H1 (cell line): ENCODE measurements at regions of chr15 and their contacts with region 1.

Region 1: DNA sequence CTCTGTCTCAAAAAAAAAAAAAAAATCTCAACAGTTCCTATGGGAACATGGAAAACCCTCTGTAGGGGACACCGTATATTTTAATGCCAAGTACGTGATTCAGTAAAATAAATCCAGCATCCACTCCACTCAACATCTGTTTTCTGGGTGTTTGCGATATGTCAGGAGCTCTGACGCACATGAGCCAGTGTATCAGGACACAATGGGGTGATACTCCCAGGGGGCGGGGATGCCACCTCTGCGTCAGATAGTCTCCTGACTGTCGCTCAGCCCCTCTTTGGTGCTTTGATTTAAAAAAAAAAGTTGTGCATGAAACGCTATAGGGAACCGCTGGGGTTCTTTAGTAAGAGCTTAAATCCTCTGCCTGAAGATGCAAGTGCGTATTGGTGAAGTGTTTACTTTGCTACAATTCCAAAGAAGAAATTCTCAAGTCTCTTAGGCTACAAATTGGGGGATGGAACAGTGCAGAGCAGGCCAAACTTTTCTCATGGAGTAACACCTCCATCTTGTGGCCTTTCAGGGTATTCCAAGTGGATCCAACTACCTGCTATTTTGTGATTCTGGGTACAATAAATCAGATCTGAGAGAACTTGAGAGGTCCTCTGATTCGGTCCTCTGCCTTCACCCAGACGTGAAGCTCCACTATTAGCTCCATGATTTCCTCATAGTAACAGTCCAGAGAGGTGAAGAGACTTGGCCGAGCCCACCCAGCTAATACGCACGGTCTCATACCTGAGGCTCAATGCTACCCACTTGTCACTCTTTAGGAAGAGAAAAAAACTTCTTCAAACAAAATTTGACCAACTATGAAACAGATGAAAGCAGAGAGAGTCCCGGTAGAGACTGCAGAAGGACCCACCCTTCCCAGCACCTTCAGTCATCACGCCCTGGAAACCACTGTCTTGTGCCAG is 9.3 kb upstream of the NR2E3 start:
- DNase-seq: peak; percentile 21 to 77
- H3K4me3 ChIP-seq: no peak overlapping the region
- H3K27ac ChIP-seq: no peak overlapping the region
- H3K4me1 ChIP-seq: peaks cover 0 to 4% (median 1%) of the 10 kb centered on the region in 4 experiments; a peak in 3 of 7 replicates
- H3K27me3 ChIP-seq: no peaks in the 10 kb centered on the region
- CTCF ChIP-seq: peak in 2 of 3 experiments; percentile 84 to 86; a peak in 3 of 4 replicates
- EP300 ChIP-seq: no peak; a peak in 1 of 3 replicates
- POLR2A ChIP-seq: no peak
- RAD21 ChIP-seq: peak; percentile 95 to 98

Region 2: DNA sequence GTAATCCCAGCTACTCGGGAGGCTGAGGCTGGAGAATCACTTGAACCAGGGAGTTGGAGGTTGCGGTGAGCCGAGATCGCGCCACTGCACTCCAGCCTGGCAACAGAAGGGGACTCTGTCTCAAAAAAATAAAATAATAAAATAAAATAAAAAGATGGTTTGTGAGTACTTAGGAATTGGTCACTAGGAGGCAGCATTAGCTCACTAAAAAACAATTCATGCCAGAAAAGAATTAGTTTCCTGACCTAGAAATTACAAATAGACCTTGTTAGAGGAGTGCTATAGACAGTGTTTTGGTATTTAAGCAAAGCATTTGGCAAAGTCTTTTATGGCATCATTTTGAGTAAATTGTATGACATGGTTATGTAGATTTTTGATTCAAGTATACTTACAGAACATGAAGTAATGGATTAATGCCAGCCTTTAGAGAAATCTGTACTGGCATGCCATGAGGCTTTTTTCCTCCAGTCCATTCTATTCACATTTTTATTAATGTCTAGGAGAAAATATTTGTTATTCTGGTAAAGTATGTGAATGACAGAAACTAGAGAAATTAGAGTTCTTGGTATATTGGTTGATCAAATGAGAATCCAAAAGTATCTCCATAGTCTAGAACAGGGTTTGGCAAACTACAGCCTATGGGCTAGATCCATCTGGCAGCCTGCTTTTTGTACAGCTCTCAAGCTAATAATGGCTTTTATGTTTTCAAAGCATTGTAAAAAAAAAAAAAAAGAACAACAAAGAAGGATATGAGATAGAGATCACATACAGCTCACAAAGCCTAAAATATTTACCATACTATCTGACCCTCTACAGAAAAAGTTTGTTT is 826.9 kb before region 1 on chr15:
- CTCF ChIA-PET with region 1: interaction called, 11 read pairs
- POLR2A ChIA-PET with region 1: no interaction called
- DNase-seq: peak in 1 of 2 experiments; percentile 42
- H3K4me3 ChIP-seq: no peak overlapping the region
- H3K27ac ChIP-seq: no peak overlapping the region
- H3K4me1 ChIP-seq: no peaks in the 10 kb centered on the region
- H3K27me3 ChIP-seq: no peaks in the 10 kb centered on the region
- CTCF ChIP-seq: peak in 2 of 3 experiments; percentile 31 to 37; a peak in 2 of 4 replicates
- EP300 ChIP-seq: no peak
- POLR2A ChIP-seq: no peak
- RAD21 ChIP-seq: peak; percentile 58 to 68

Region 3: DNA sequence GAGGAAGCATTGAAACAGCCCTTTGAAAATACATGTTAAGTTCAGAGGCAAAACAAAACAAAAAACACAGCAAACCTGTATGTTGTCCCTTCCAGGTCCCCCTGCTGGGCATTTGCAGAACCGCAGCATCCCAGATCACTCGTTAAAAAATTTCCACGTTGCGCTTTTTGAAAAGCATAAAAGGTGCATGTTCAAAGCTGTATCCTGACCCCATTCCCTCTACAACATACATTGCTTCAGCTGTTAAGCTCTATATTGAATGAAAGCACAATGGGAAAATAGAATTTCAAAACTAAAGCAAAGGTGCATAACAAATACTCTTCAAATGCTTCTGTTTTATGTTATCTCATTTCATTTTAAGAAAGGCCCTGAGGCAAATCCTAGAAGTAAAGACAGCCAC is 357.6 kb before region 1 on chr15:
- CTCF ChIA-PET with region 1: interaction called, 28 read pairs
- POLR2A ChIA-PET with region 1: no interaction called
- DNase-seq: peak in 1 of 2 experiments; percentile 79
- H3K4me3 ChIP-seq: no peak overlapping the region
- H3K27ac ChIP-seq: no peak overlapping the region
- H3K4me1 ChIP-seq: peaks cover 0 to 6% (median 3%) of the 10 kb centered on the region in 4 experiments; a peak in 3 of 7 replicates
- H3K27me3 ChIP-seq: no peaks in the 10 kb centered on the region
- CTCF ChIP-seq: peak; percentile 59 to 66 (median 65)
- EP300 ChIP-seq: no peak
- POLR2A ChIP-seq: no peak
- RAD21 ChIP-seq: peak; percentile 49 to 62

Region 4: GRCh38 chr15:71669688-71670087 is 131.4 kb before region 1 on chr15:
- CTCF ChIA-PET with region 1: no interaction called
- POLR2A ChIA-PET with region 1: no interaction called
- DNase-seq: no peak
- H3K4me3 ChIP-seq: no peak overlapping the region
- H3K27ac ChIP-seq: no peak overlapping the region
- H3K4me1 ChIP-seq: no peaks in the 10 kb centered on the region
- H3K27me3 ChIP-seq: no peaks in the 10 kb centered on the region
- CTCF ChIP-seq: no peak
- EP300 ChIP-seq: no peak
- POLR2A ChIP-seq: no peak
- RAD21 ChIP-seq: no peak

Region 5: DNA sequence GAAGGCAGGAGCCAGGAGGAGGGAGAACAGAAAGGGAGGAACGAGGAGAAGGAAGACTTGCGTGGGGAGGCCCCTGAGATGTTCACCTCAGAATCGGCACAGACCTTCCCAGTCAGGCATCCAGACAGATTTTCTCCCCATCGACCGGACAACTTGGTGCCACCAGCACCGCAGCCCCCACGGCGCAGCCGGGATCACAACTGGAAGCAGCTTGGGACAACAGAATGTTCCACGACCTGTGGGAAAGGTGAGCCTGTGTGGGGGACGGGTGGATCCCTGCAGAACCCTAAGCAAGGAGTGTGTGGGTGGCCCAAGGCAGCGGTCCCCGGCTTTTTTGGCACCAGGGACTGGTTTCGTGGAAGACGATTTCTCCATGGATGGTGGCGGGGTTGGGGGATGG is 63.3 kb before region 1 on chr15:
- CTCF ChIA-PET with region 1: interaction called, 47 read pairs
- POLR2A ChIA-PET with region 1: no interaction called
- DNase-seq: no peak
- H3K4me3 ChIP-seq: no peak overlapping the region
- H3K27ac ChIP-seq: no peak overlapping the region
- H3K4me1 ChIP-seq: no peaks in the 10 kb centered on the region
- H3K27me3 ChIP-seq: no peaks in the 10 kb centered on the region
- CTCF ChIP-seq: no peak
- EP300 ChIP-seq: no peak
- POLR2A ChIP-seq: no peak
- RAD21 ChIP-seq: no peak

Region 6: GRCh38 chr15:71752604-71753289 is 48.3 kb before region 1 on chr15:
- CTCF ChIA-PET with region 1: interaction called, 67 read pairs
- POLR2A ChIA-PET with region 1: no interaction called
- DNase-seq: no peak
- H3K4me3 ChIP-seq: no peak overlapping the region
- H3K27ac ChIP-seq: no peak overlapping the region
- H3K4me1 ChIP-seq: no peaks in the 10 kb centered on the region
- H3K27me3 ChIP-seq: no peaks in the 10 kb centered on the region
- CTCF ChIP-seq: peak; percentile 28 to 66 (median 57)
- EP300 ChIP-seq: no peak
- POLR2A ChIP-seq: no peak
- RAD21 ChIP-seq: peak; percentile 64 to 72

Region 7: GRCh38 chr15:71780115-71780976 is 20.7 kb before region 1 on chr15:
- CTCF ChIA-PET with region 1: interaction called, 42 read pairs
- POLR2A ChIA-PET with region 1: no interaction called
- DNase-seq: peak in 1 of 2 experiments; percentile 31
- H3K4me3 ChIP-seq: no peak overlapping the region
- H3K27ac ChIP-seq: no peak overlapping the region
- H3K4me1 ChIP-seq: no peaks in the 10 kb centered on the region; a peak in 3 of 7 replicates
- H3K27me3 ChIP-seq: no peaks in the 10 kb centered on the region
- CTCF ChIP-seq: peak; percentile 50 to 76 (median 68)
- EP300 ChIP-seq: no peak
- POLR2A ChIP-seq: no peak
- RAD21 ChIP-seq: peak; percentile 51 to 67

Region 8: DNA sequence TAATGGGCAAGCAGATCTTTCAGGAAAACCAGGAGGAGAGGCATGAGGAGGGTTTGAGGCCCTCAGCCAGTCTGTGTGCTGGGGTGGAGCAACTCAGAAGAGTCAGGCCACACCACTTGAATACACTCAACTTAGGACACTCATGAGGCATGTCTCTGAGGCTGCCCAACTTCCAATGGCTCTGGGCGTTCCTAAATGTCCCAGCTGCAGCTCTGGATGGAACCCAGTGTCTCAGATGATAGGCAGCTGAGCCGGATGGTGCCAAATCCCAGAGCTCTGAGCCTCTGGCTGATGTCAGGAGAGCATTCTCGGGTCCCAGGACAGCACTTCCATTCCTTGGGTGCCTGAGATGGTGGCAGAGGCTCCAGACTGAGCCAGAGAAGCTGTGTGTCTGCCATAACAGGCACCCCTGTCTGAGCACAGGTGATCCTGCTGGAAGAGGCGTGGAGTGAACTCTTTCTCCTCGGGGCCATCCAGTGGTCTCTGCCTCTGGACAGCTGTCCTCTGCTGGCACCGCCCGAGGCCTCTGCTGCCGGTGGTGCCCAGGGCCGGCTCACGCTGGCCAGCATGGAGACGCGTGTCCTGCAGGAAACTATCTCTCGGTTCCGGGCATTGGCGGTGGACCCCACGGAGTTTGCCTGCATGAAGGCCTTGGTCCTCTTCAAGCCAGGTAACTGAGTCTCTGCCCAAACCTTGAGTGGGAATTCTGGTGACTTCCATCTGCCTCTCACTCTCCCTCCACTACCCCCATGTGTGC is 12.1 kb after region 1 on chr15:
- CTCF ChIA-PET with region 1: interaction called, 12 read pairs
- POLR2A ChIA-PET with region 1: no interaction called
- DNase-seq: no peak
- H3K4me3 ChIP-seq: no peak overlapping the region
- H3K27ac ChIP-seq: no peak overlapping the region
- H3K4me1 ChIP-seq: peaks cover 0 to 12% (median 6%) of the 10 kb centered on the region in 4 experiments; a peak in 6 of 7 replicates
- H3K27me3 ChIP-seq: no peaks in the 10 kb centered on the region
- CTCF ChIP-seq: no peak
- EP300 ChIP-seq: no peak
- POLR2A ChIP-seq: no peak
- RAD21 ChIP-seq: no peak

Region 9: DNA sequence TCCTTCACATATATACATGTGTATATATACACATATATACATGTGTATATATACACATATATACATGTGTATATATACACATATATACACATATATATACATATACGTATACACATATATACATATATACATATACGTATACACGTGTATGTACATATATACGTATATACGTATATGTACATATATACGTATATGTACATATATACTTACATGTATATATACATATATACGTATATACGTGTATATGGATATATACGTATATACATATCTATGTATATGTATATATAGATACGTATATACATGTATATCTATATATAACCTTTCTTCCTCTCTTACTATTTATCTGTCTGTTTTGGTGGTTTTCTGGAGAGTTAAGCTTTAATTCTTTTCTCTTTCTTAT is 124.1 kb after region 1 on chr15:
- CTCF ChIA-PET with region 1: no interaction called
- POLR2A ChIA-PET with region 1: no interaction called
- DNase-seq: no peak
- H3K4me3 ChIP-seq: no peak overlapping the region
- H3K27ac ChIP-seq: no peak overlapping the region
- H3K4me1 ChIP-seq: no peaks in the 10 kb centered on the region
- H3K27me3 ChIP-seq: no peaks in the 10 kb centered on the region
- CTCF ChIP-seq: no peak
- EP300 ChIP-seq: no peak
- POLR2A ChIP-seq: no peak
- RAD21 ChIP-seq: no peak